PC-9 (cell line): ENCODE measurements at regions of chr11 and their contacts with region 1.

Region 1: DNA sequence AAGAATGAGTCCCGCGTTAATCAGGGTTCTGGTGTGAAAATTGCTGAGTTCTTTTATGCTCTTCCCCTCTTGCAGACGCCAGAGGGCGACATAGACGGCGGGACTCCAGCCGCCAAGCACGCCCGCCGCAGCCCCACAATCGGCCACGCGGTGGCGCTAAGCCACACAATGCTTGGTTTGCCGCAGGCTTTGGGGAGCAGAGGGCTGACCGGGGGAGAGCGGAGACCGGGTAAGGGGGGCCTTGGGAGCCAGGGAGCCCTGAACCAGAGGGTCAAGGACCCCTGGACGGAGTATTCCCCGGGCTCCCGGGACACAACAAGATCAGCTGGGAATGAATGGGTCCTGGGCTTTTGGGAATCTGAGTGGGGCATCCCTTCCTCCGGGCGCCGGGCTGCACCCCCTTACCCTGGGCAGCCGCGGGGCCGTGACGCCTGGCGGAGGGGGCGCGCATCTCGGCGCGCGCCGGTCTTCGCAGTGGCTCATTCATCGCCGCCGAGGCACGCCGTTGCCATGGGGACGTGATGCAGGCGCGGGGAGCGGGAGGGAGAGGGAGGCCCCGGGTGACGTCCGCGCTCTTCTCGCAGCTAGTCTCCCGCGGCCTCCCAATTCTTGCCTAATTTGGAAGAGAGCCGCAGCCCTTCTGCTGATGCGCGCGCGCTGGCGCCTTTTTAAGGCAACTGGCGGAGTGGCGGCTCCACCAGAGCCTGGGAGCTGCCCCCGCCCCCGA is 12.2 kb upstream of the NPAS4 start:
- DNase-seq: peak; percentile 58 to 87
- H3K4me3 ChIP-seq: no peak overlapping the region
- H3K27ac ChIP-seq: no peak overlapping the region
- H3K4me1 ChIP-seq: no peaks in the 10 kb centered on the region
- H3K27me3 ChIP-seq: peaks cover 88% of the 10 kb centered on the region
- CTCF ChIP-seq: peak; percentile 100

Region 2: GRCh38 chr11:66157179-66157864 is 251.3 kb before region 1 on chr11:
- CTCF ChIA-PET with region 1: no interaction called
- POLR2A ChIA-PET with region 1: no interaction called
- intact Hi-C with region 1: no loop called
- DNase-seq: no peak
- H3K4me3 ChIP-seq: no peak overlapping the region
- H3K27ac ChIP-seq: peak overlapping the region; percentile 27
- H3K4me1 ChIP-seq: peaks cover 9% of the 10 kb centered on the region
- H3K27me3 ChIP-seq: no peaks in the 10 kb centered on the region
- CTCF ChIP-seq: no peak; the same call in 1 of the 2 replicates

Region 3: DNA sequence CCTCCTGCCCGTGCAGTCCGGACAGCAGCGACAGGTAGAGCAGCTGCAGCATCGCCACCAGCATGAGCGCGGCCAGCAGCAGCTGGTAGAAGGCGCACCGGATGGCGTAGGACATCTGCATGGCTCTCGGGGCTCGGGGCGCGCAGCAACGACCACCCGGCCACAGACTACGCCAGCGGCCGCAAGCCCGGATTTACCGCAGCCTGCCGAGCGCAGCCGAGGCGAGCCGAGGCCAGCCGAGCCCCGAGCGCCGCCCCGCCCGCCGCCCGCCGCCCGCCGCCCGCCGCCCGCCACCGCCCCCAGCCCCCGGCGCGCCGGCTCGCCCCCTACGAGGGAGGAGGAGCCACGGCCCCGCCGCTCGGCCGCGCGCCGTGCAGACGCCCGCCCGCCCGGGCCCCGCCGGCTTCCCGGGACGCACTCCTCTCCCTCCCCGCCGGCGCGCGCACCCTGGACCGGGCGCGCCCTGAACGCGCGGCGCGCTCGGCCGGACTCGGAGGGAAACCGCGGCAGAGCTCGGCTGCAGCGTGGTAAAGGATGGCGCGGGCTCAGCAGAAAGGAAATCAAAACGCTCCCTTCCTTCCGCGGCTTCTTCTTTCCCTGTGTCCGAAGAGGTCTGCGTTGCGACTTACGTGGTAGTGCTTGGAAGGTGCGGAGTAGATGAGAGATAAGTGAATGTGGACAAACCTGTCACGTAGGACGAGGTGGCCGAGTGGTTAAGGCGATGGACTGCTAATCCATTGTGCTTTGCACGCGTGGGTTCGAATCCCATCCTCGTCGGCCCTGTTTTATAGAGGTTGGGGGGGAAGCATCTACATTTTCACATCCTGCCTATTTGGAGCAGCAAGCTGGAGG is 61.0 kb before region 1 on chr11 and contains the start of gene B4GAT1:
- CTCF ChIA-PET with region 1: no interaction called
- POLR2A ChIA-PET with region 1: no interaction called
- intact Hi-C with region 1: no loop called
- DNase-seq: peak; percentile 88 to 94
- H3K4me3 ChIP-seq: peak within 1 kb of the TSS; percentile 100
- H3K27ac ChIP-seq: peak within 1 kb of the TSS; percentile 16; the same call in 1 of the 2 replicates
- H3K4me1 ChIP-seq: peaks cover 34% of the 10 kb centered on the region
- H3K27me3 ChIP-seq: no peaks in the 10 kb centered on the region
- CTCF ChIP-seq: no peak
- total RNA-seq, gene B4GAT1: 22.8 and 28.5 TPM in 2 replicates

Region 4: DNA sequence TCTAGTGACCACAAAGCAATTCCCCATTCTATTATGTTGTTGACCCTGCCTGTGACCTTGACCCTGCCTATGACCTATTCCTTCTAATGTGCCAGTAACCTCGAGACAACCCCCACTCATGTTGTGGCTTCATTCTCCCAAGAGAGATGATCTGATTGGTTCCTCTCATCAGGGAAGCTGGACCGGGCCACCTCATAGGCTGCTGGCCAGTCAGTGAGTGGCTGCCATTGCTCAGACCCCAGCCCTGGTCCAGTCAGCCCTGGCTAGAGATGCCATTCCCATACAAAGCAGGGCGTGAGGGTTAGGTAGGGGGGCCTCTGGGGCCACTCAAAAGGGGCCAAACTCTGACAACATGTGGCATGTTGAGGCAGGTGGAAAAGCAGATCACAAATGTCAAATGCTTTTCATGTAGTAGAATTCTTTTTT is 49.0 kb before region 1 on chr11:
- CTCF ChIA-PET with region 1: no interaction called
- POLR2A ChIA-PET with region 1: no interaction called
- intact Hi-C with region 1: no loop called
- DNase-seq: no peak
- H3K4me3 ChIP-seq: no peak overlapping the region
- H3K27ac ChIP-seq: no peak overlapping the region
- H3K4me1 ChIP-seq: no peaks in the 10 kb centered on the region
- H3K27me3 ChIP-seq: no peaks in the 10 kb centered on the region
- CTCF ChIP-seq: no peak

Region 5: GRCh38 chr11:66429983-66430602 is 21.4 kb after region 1 on chr11:
- CTCF ChIA-PET with region 1: interaction called, 5 read pairs
- POLR2A ChIA-PET with region 1: no interaction called
- intact Hi-C with region 1: loop called (anchors 1 kb)
- DNase-seq: peak in 1 of 2 experiments; percentile 53
- H3K4me3 ChIP-seq: no peak overlapping the region
- H3K27ac ChIP-seq: no peak overlapping the region
- H3K4me1 ChIP-seq: no peaks in the 10 kb centered on the region
- H3K27me3 ChIP-seq: peaks cover 3% of the 10 kb centered on the region; the same call in 1 of the 2 replicates
- CTCF ChIP-seq: peak; percentile 95

Region 6: DNA sequence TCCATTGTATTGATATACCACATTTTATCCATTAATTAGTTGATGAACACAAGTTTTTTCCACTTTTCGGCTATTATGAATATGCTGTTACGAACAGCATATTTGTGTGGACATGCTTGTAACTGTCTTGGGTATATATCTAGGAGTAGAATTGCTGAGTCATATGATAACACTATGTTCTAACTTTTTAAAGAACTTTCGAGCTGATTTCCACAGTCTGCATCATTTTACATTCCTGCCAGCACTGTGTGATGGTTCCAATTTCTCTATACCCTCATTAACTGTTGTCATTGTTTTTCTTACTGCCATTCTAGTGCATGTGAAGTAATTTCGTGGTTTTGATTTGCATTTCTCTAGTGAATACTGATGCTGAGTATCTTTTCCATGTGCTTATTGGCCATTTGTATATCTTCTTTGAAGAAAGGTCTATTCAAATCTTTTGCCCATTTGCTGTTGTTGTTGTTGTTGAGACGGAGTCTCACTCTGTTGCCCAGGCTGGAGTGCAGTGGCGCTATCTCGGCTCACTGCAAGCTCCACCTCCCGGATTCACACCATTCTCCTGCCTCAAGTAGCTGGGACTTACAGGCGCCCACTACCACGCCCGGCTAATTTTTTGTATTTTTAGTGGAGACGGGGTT is 427.2 kb after region 1 on chr11:
- CTCF ChIA-PET with region 1: no interaction called
- POLR2A ChIA-PET with region 1: no interaction called
- intact Hi-C with region 1: loop called (anchors 2 kb)
- DNase-seq: no peak
- H3K4me3 ChIP-seq: no peak overlapping the region
- H3K27ac ChIP-seq: no peak overlapping the region
- H3K4me1 ChIP-seq: peaks cover 9% of the 10 kb centered on the region
- H3K27me3 ChIP-seq: no peaks in the 10 kb centered on the region
- CTCF ChIP-seq: no peak